PC-3 (cell line): ENCODE measurements at regions of chr10 and their contacts with region 1.

Region 1: GRCh38 chr10:84613336-84614021 is 285.1 kb downstream of the CCSER2 start:
- DNase-seq: peak; percentile 87
- ATAC-seq: peak; percentile 99
- H3K4me3 ChIP-seq: peak overlapping the region; percentile 38; the same call in 1 of the 2 replicates
- H3K27ac ChIP-seq: no peak overlapping the region
- H3K4me1 ChIP-seq: peaks cover 6% of the 10 kb centered on the region; the same call in 1 of the 2 replicates
- H3K27me3 ChIP-seq: no peaks in the 10 kb centered on the region; the same call in 1 of the 2 replicates
- CTCF ChIP-seq: peak; percentile 90

Region 2: DNA sequence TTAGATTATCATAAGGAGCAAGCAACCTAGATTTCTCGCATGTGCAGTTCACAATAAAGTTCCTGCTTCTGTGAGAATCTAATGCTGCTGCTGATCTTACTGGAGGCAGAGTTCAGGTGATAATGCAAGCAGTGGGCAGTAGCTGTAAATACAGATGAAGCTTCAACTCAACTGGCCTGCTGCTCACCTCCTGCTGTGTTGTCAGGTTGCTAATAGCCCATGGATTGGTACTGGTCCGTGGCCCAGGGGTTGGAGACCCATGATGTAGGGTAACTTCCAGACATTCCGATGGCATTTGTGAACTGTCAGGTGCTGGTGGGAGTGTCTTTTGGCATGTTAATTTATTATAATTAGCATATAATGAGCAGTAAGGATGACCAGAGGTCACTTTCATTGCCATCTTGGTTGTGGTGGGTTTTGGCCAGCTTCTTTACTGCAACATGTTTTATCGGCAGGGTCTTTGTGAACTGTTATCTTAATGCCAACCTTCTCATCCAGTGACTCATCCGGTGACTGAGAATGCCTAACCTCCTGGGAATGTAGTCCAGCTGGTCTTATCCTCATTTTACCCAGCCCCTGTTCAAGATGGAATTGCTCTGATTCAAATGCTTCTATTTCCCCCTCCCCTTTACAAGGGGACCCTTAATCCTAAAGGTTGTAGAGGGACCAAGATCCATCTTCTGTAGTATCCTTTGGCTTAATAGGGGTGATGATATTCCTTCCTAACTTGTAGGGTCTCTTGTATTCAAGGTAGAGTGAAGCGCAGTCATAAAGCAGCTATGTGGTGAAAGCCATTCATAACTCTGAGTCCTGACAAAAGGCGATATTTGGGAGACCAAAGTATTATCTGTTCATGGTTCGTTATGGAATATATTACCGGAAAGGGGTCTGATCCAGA is 119.3 kb before region 1 on chr10:
- CTCF ChIA-PET with region 1: no interaction called
- POLR2A ChIA-PET with region 1: no interaction called
- intact Hi-C with region 1: no loop called
- DNase-seq: peak; percentile 83
- ATAC-seq: peak; percentile 83
- H3K4me3 ChIP-seq: peak overlapping the region; percentile 26; the same call in 1 of the 2 replicates
- H3K27ac ChIP-seq: peak overlapping the region; percentile 40
- H3K4me1 ChIP-seq: peaks cover 38% of the 10 kb centered on the region
- H3K27me3 ChIP-seq: no peaks in the 10 kb centered on the region
- CTCF ChIP-seq: no peak

Region 3: GRCh38 chr10:84632866-84633265 is 19.4 kb after region 1 on chr10:
- CTCF ChIA-PET with region 1: interaction called, 6 read pairs
- POLR2A ChIA-PET with region 1: no interaction called
- intact Hi-C with region 1: loop called (anchors 1 kb)
- DNase-seq: peak; percentile 91
- ATAC-seq: peak; percentile 97
- H3K4me3 ChIP-seq: no peak overlapping the region
- H3K27ac ChIP-seq: peak overlapping the region; percentile 100
- H3K4me1 ChIP-seq: peaks cover 22% of the 10 kb centered on the region
- H3K27me3 ChIP-seq: no peaks in the 10 kb centered on the region
- CTCF ChIP-seq: no peak

Region 4: DNA sequence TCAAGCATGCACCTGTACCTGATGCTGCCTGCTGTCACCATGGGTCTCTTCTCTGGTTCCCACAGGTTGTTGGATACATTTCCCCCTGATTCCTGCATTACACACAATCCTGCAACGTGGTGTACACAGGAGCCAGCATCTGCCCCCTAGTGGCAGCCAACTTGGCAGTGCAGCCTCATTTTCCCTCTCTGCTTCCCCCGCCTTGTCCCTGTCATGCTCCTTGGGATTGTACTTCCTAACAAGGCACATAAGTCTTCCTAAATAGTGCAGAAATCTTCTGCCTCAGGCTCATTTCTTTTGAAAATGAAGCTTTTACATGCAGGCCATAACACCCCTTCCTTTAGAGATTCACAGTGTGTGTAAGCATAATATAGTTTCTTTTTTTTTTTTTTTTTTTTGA is 102.4 kb after region 1 on chr10:
- CTCF ChIA-PET with region 1: interaction called, 5 read pairs
- POLR2A ChIA-PET with region 1: no interaction called
- intact Hi-C with region 1: loop called (anchors 1 kb)
- DNase-seq: peak; percentile 59
- ATAC-seq: peak; percentile 56; the same call in 1 of the 2 replicates
- H3K4me3 ChIP-seq: no peak overlapping the region
- H3K27ac ChIP-seq: no peak overlapping the region
- H3K4me1 ChIP-seq: no peaks in the 10 kb centered on the region
- H3K27me3 ChIP-seq: peaks cover 11% of the 10 kb centered on the region; the same call in 1 of the 2 replicates
- CTCF ChIP-seq: peak; percentile 69

Region 5: DNA sequence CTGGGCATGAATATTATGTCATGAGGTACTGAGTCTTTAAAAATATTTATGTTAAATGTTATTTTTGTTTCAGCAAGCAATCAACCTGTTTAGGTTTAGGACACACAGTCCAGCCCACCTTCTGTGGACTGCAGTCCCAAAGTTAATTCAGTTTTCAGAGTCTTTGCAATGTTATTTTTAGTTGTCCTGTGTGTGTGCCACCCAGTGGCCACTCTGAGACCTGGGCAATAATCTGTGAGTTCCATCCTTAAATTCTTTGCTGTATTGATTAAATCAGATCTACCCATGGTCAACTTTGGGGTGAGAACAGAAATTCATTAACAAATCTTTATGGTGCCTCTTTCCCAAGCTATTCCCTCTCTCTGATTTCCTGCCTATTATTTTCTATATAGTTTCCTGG is 130.0 kb after region 1 on chr10:
- CTCF ChIA-PET with region 1: interaction called, 4 read pairs
- POLR2A ChIA-PET with region 1: no interaction called
- intact Hi-C with region 1: loop called (anchors 1 kb)
- DNase-seq: peak; percentile 37
- ATAC-seq: no peak
- H3K4me3 ChIP-seq: no peak overlapping the region
- H3K27ac ChIP-seq: no peak overlapping the region
- H3K4me1 ChIP-seq: no peaks in the 10 kb centered on the region
- H3K27me3 ChIP-seq: no peaks in the 10 kb centered on the region
- CTCF ChIP-seq: peak; percentile 67

Region 6: DNA sequence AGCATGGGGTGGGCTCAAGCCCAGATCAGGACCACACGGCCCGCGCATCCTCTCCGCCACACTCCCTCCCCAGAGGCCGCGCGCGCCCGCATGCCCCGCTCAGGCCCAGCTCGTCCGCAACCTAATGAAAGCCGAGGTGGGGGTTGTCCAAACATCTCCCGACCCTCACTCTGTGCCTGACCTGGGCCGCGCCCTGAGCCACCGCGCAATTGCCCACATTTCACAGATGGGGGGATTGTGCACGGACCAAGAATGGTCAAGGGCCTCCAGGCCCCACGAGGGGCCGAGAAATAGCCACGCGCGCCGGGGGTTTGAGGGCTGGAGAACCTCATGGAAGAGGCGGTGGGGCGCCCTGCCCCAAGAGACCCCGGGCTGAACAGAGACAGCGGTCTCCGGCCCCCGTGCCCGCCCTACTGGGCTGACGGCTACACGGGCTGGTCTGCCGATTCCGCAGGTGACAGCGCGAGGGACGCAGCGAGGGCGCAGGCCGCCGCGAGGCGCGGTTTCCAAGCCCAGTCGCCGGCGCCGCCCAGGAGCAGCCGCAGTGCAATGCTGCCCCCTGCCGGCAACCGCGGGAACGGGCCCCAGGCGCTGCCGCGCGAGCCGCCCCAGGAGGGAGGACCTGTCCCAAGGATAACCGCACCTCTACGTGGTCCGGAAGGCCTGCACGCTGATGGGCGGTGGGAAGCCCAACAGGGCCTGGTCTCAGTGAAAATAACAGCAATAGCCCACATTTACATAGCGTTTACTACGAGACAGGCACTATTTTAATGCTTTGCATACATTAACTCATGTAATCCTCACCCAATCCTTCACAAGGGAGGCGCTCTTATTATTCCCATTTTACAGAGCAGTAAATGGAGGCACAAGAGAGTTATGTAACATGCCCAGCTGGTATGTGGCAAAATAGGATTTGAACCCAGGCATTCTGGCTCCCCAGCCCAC is 1763.6 kb after region 1 on chr10:
- CTCF ChIA-PET with region 1: no interaction called
- POLR2A ChIA-PET with region 1: no interaction called
- intact Hi-C with region 1: loop called (anchors 5 kb)
- DNase-seq: peak; percentile 69
- ATAC-seq: peak; percentile 99
- H3K4me3 ChIP-seq: peak overlapping the region; percentile 38; the same call in 1 of the 2 replicates
- H3K27ac ChIP-seq: no peak overlapping the region
- H3K4me1 ChIP-seq: no peaks in the 10 kb centered on the region
- H3K27me3 ChIP-seq: peaks cover 8% of the 10 kb centered on the region; the same call in 1 of the 2 replicates
- CTCF ChIP-seq: peak; percentile 84